ENCODE measurements at regions of chr16 and their contacts with region 1.

Region 1: DNA sequence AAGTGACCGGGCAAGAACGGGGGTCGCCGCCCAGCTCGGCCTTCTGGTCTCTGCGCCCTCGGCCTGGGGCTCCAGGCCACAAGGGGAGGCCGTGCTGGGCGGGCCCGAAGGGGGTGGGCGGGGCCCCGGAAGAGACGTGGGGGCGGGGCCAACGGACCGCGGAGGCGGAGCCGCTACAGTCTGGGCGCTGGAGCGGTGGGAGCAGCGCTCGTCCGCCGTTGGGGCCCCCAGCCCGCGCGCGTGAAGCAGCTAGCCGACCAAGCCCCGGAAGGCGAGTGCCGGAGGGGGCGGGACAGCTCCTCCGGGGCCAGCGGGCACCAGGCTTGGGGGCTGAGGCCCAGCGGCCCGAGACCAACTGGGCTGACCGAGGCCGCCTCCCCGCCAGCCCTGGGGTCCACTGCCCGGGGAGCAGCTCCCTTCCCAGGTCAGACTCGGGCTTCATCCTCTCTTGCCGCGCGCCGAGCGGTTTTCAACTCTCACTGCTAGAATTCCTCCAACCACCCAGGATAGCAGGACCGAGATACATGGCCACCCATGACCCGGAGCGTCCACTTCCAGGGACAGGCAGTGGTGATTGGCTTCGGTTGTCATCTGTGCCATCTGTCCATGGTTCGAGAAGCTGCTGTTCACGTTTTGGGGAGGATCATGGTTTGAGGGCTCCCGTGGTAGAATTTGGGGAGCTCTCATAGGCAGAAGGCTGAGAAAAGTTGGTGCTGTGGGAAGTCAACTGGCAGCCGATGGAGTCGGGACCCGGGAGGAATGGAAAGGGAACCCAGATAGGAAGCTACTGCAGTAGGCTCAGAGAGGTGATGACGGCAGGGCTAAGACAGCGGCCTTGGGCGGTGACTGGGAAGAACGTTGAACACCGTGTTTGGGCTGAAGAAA is 44.6 kb upstream of the LCMT1 start:
- DNase-seq: peak; percentile 91
- ATAC-seq: peak; percentile 96
- H3K4me3 ChIP-seq: peak overlapping the region; percentile 72 to 95 (median 89)
- H3K4me3 Mint-ChIP-seq: peak overlapping the region; percentile 90
- H3K27ac ChIP-seq: peak overlapping the region; percentile 81 to 84
- H3K27ac Mint-ChIP-seq: peak overlapping the region; percentile 93
- H3K4me1 ChIP-seq: peaks cover 41 to 53% of the 10 kb centered on the region in 2 donors
- H3K4me1 Mint-ChIP-seq: peaks cover 55% of the 10 kb centered on the region
- H3K27me3 ChIP-seq: no peaks in the 10 kb centered on the region
- H3K27me3 Mint-ChIP-seq: no peaks in the 10 kb centered on the region
- CTCF ChIP-seq: no peak

Region 2: GRCh38 chr16:24834459-24835335 is 232.3 kb before region 1 on chr16:
- CTCF ChIA-PET with region 1: no interaction called
- POLR2A ChIA-PET with region 1: no interaction called
- intact Hi-C with region 1: no loop called
- DNase-seq: no peak
- ATAC-seq: no peak
- H3K4me3 ChIP-seq: no peak overlapping the region
- H3K4me3 Mint-ChIP-seq: no peak overlapping the region
- H3K27ac ChIP-seq: no peak overlapping the region
- H3K27ac Mint-ChIP-seq: no peak overlapping the region
- H3K4me1 ChIP-seq: no peaks in the 10 kb centered on the region
- H3K4me1 Mint-ChIP-seq: no peaks in the 10 kb centered on the region
- H3K27me3 ChIP-seq: no peaks in the 10 kb centered on the region
- H3K27me3 Mint-ChIP-seq: no peaks in the 10 kb centered on the region
- CTCF ChIP-seq: no peak

Region 3: GRCh38 chr16:24896439-24896838 is 170.6 kb before region 1 on chr16:
- CTCF ChIA-PET with region 1: no interaction called
- POLR2A ChIA-PET with region 1: no interaction called
- intact Hi-C with region 1: no loop called
- DNase-seq: peak; percentile 42
- ATAC-seq: peak; percentile 65
- H3K4me3 ChIP-seq: no peak overlapping the region
- H3K4me3 Mint-ChIP-seq: no peak overlapping the region
- H3K27ac ChIP-seq: no peak overlapping the region
- H3K27ac Mint-ChIP-seq: no peak overlapping the region
- H3K4me1 ChIP-seq: peaks cover 4 to 6% of the 10 kb centered on the region in 2 donors
- H3K4me1 Mint-ChIP-seq: peaks cover 5% of the 10 kb centered on the region
- H3K27me3 ChIP-seq: no peaks in the 10 kb centered on the region
- H3K27me3 Mint-ChIP-seq: peaks cover 10% of the 10 kb centered on the region
- CTCF ChIP-seq: no peak

Region 4: GRCh38 chr16:25014500-25015147 is 52.4 kb before region 1 on chr16:
- CTCF ChIA-PET with region 1: no interaction called
- POLR2A ChIA-PET with region 1: no interaction called
- intact Hi-C with region 1: loop called (anchors 1 kb)
- DNase-seq: no peak
- ATAC-seq: peak; percentile 16
- H3K4me3 ChIP-seq: peak overlapping the region; percentile 73 to 92 (median 79)
- H3K4me3 Mint-ChIP-seq: peak overlapping the region; percentile 97
- H3K27ac ChIP-seq: peak overlapping the region; percentile 61 to 89
- H3K27ac Mint-ChIP-seq: peak overlapping the region; percentile 96
- H3K4me1 ChIP-seq: peaks cover 75 to 80% of the 10 kb centered on the region in 2 donors
- H3K4me1 Mint-ChIP-seq: peaks cover 84% of the 10 kb centered on the region
- H3K27me3 ChIP-seq: no peaks in the 10 kb centered on the region
- H3K27me3 Mint-ChIP-seq: no peaks in the 10 kb centered on the region
- CTCF ChIP-seq: no peak

Region 5: DNA sequence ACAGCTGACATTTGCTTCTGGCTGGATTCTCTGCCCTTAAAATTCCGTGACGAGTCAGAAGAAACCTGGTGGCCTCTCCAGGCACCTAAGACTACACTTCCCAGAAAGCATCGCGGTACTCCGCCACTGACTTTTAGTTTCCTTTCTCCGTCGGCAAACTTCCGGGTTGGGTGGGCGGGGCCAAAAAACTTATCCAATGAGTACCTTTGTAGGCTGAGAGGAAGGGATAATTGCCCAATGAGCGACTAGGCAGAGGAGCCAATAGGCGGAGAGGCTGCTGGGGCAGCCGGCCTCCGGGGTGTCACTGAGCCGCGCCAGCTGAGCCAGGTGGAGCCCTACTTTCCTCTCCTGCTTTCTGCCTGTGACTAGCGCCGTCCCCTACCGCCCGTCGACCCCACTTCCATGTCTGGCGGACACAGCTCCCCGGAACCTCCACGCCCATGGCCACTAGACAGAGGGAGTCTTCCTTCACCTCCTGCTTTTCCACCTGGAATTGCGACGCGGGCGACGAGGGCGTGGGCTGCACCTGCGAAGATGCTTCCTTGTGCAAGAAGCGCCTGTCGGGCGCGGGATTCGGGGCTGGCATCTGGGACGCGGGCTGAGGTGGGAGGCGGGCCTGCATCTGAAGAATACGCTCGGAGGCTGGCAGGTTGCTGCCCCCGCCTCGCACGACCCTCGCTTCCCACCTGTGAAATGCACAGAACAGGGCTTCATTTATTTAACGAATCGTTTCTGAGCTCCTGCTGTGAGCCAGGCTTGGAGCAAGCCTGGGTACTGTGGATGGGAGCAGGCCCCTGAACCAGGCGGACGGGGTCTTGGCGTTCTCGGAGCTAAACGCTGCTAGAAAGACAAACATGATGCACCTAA is 35.3 kb before region 1 on chr16:
- CTCF ChIA-PET with region 1: no interaction called
- POLR2A ChIA-PET with region 1: no interaction called
- intact Hi-C with region 1: loop called (anchors 1 kb)
- DNase-seq: peak; percentile 95
- ATAC-seq: peak; percentile 98
- H3K4me3 ChIP-seq: peak overlapping the region; percentile 70 to 91 (median 74)
- H3K4me3 Mint-ChIP-seq: peak overlapping the region; percentile 85
- H3K27ac ChIP-seq: peak overlapping the region; percentile 76 to 81
- H3K27ac Mint-ChIP-seq: peak overlapping the region; percentile 87
- H3K4me1 ChIP-seq: peaks cover 29 to 47% of the 10 kb centered on the region in 2 donors
- H3K4me1 Mint-ChIP-seq: peaks cover 45% of the 10 kb centered on the region
- H3K27me3 ChIP-seq: no peaks in the 10 kb centered on the region
- H3K27me3 Mint-ChIP-seq: no peaks in the 10 kb centered on the region
- CTCF ChIP-seq: no peak

Region 6: DNA sequence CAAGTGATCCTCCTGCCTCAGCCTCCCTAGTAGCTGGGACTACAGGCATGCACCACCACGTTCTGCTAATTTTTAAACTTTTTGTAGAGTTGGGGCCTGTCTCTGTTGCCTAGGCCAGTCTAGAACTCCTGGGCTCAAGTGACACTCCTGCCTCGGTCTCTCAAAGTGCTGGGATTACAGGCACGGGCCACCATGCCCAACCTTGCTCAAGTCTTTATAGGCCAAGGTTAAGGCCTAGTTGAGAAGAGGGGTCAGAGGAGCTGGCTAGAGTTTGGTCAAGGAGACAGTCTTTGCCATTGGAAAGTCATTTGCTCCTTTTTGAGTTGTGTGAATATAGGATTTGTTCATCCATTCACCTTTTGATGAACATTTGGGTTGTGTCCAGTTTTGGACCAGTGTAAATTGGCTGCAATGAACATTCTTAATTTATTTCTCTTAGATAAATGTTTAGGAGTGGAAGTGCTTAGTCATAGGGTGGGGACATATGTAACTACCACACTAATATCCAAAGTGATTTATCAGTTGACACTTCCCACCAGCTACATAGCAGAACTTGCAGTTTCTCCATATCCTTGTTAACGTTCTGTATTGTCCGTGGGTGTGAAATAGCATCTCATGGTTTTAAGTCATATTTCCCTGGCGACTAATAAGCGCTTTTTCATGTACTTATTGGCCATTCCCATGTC is 21.1 kb before region 1 on chr16:
- CTCF ChIA-PET with region 1: interaction called, 3 read pairs
- POLR2A ChIA-PET with region 1: interaction called, 4 read pairs
- intact Hi-C with region 1: loop called (anchors 2 kb)
- DNase-seq: no peak
- ATAC-seq: no peak
- H3K4me3 ChIP-seq: no peak overlapping the region
- H3K4me3 Mint-ChIP-seq: no peak overlapping the region
- H3K27ac ChIP-seq: no peak overlapping the region
- H3K27ac Mint-ChIP-seq: peak overlapping the region; percentile 61
- H3K4me1 ChIP-seq: peaks cover 40 to 42% of the 10 kb centered on the region in 2 donors
- H3K4me1 Mint-ChIP-seq: peaks cover 47% of the 10 kb centered on the region
- H3K27me3 ChIP-seq: no peaks in the 10 kb centered on the region
- H3K27me3 Mint-ChIP-seq: no peaks in the 10 kb centered on the region
- CTCF ChIP-seq: no peak

Region 7: DNA sequence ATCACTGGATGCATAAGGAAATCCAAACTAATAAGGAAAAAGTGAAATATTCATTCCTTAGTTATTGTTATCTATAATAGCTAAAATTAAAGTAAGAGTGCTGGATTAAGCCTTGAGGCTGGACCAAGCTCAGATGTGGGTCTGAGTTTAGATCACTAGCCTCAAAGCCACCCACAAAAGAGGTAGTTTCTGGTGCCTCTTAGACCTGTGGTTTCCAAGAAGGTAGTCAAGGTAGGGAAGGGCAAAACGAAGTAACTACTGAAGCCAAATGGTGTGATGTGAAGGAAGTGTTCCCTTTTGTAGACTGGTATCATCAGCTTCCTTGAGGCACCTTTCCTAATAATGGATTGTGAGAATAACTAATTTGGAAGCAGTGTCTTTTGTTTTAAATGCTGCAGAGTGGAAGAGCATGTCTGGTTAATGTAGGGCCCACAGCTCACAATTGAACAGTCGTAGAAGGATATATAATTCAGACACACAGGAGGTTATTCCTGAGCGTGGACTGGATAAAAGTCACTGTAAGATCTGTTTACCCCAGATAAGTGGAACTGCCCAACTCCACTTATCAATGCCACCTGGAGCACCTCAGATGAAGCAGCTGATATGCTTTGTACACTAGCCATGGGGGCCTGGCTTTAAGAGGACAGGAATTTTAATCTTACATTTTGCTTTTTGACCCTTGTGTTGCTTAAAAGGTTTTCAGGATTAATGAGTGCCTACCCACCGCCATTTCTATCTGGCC is 12.8 kb after region 1 on chr16:
- CTCF ChIA-PET with region 1: interaction called, 4 read pairs
- POLR2A ChIA-PET with region 1: interaction called, 16 read pairs
- intact Hi-C with region 1: no loop called
- DNase-seq: no peak
- ATAC-seq: no peak
- H3K4me3 ChIP-seq: no peak overlapping the region
- H3K4me3 Mint-ChIP-seq: no peak overlapping the region
- H3K27ac ChIP-seq: no peak overlapping the region
- H3K27ac Mint-ChIP-seq: no peak overlapping the region
- H3K4me1 ChIP-seq: no peaks in the 10 kb centered on the region
- H3K4me1 Mint-ChIP-seq: peaks cover 3% of the 10 kb centered on the region
- H3K27me3 ChIP-seq: no peaks in the 10 kb centered on the region
- H3K27me3 Mint-ChIP-seq: no peaks in the 10 kb centered on the region
- CTCF ChIP-seq: no peak

Region 8: DNA sequence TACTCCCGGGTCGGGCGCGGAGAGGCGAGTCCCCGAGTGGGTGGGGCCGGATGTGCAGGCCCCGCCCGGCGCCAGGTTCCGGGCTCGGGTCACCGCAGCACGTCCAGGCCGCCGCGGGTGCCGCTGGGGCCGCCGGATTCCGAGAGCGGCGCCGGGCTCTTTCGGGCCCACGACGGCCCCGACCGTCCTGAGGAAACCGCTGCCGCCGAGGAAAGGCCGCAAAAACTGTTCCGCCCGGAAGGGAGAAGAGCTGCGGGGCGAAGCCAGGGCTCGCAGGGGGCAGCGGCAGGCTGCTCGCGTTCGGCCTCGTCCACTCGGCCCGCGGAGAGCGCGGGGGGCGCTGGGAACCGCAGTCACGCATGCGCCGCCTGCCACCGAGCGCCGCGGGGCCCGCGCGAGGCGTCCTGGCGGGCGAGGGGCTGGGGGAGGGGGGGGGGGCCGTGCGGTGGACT is 190.5 kb after region 1 on chr16 and contains the start of gene ZKSCAN2:
- CTCF ChIA-PET with region 1: no interaction called
- POLR2A ChIA-PET with region 1: no interaction called
- intact Hi-C with region 1: loop called (anchors 1 kb)
- DNase-seq: peak; percentile 91
- ATAC-seq: peak; percentile 90
- H3K4me3 ChIP-seq: peak within 1 kb of the TSS; percentile 57 to 81 (median 79)
- H3K4me3 Mint-ChIP-seq: peak within 1 kb of the TSS; percentile 98
- H3K27ac ChIP-seq: peak within 1 kb of the TSS; percentile 79 to 92
- H3K27ac Mint-ChIP-seq: peak within 1 kb of the TSS; percentile 98
- H3K4me1 ChIP-seq: peaks cover 20 to 28% of the 10 kb centered on the region in 2 donors
- H3K4me1 Mint-ChIP-seq: peaks cover 38% of the 10 kb centered on the region
- H3K27me3 ChIP-seq: no peaks in the 10 kb centered on the region
- H3K27me3 Mint-ChIP-seq: no peaks in the 10 kb centered on the region
- CTCF ChIP-seq: no peak
- total RNA-seq, gene ZKSCAN2: 9.0 and 9.1 TPM in 2 replicates

Region 9: DNA sequence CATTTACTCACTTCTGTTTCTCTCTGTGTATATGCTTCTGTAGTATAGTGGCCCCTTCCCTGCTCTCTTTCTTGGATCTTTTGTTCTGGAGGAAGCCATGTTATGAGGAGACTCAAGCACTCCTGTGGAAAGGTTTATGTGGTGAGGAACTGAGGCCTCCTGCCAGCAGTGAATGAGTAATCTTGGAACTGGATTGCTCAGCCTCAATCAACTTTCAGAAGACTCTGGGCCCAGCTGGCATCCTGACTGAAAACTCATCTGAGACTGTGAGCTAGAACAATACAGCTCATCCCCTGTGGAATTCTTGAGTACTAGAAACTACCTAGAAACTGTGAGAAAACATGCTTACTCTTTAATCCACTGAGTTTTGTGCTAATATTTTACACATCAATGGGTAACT is 323.8 kb after region 1 on chr16:
- CTCF ChIA-PET with region 1: no interaction called
- POLR2A ChIA-PET with region 1: no interaction called
- intact Hi-C with region 1: no loop called
- DNase-seq: no peak
- ATAC-seq: no peak
- H3K4me3 ChIP-seq: no peak overlapping the region
- H3K4me3 Mint-ChIP-seq: no peak overlapping the region
- H3K27ac ChIP-seq: no peak overlapping the region
- H3K27ac Mint-ChIP-seq: no peak overlapping the region
- H3K4me1 ChIP-seq: no peaks in the 10 kb centered on the region
- H3K4me1 Mint-ChIP-seq: no peaks in the 10 kb centered on the region
- H3K27me3 ChIP-seq: no peaks in the 10 kb centered on the region
- H3K27me3 Mint-ChIP-seq: peaks cover 8% of the 10 kb centered on the region
- CTCF ChIP-seq: no peak